ENCODE measurements at regions of chr16 and their contacts with region 1.

Region 1: GRCh38 chr16:10509534-10510025 is 70.8 kb downstream of the EMP2 start:
- DNase-seq: peak; percentile 75
- ATAC-seq: peak; percentile 84
- H3K4me3 Mint-ChIP-seq: no peak overlapping the region
- H3K27ac Mint-ChIP-seq: no peak overlapping the region
- H3K4me1 Mint-ChIP-seq: peaks cover 3% of the 10 kb centered on the region
- H3K27me3 Mint-ChIP-seq: peaks cover 19% of the 10 kb centered on the region

Region 2: DNA sequence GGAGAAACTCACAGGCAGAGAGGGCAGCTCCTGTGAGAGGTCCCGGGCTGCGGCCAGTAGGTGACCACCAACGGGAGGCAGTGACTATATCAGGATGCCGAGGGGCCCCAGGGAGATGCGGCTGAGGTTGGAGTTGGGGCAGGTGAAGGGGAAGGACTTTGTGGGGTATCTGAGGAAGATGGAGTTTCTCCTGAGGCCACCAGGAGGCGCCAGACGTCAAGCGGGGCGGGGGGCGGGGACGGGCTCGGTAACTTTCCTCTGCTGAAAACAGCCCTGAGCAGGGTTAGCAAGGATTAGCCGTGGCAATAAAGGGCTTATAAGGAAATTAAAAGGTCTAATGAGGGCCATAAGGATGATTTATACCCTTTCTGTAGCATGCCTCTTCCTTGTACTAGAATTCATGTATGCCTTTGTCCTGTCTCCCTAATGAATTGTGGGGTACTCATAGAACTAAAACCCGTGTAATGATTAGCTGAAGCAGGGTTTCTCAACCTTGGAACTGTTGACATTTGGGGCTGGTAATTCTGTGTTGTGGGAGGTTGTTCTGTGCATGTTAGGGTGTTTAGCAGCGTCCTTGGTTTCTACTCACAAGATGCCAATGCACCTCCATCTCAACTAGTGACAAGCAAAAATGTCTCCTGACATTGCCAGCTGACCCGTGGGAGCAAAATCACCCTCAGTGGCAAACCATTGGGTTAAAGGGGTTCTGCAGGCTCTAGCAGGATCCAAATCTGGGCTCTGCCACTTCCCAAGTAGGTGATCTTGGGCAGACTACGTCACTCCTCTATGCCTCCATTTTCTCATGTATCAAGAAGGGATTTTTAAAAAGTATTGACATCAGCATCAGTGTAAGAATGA is 252.6 kb before region 1 on chr16:
- CTCF ChIA-PET with region 1: interaction called, 44 read pairs
- DNase-seq: peak; percentile 56
- ATAC-seq: peak; percentile 57
- H3K4me3 Mint-ChIP-seq: no peak overlapping the region
- H3K27ac Mint-ChIP-seq: no peak overlapping the region
- H3K4me1 Mint-ChIP-seq: peaks cover 6% of the 10 kb centered on the region
- H3K27me3 Mint-ChIP-seq: peaks cover 3% of the 10 kb centered on the region

Region 3: DNA sequence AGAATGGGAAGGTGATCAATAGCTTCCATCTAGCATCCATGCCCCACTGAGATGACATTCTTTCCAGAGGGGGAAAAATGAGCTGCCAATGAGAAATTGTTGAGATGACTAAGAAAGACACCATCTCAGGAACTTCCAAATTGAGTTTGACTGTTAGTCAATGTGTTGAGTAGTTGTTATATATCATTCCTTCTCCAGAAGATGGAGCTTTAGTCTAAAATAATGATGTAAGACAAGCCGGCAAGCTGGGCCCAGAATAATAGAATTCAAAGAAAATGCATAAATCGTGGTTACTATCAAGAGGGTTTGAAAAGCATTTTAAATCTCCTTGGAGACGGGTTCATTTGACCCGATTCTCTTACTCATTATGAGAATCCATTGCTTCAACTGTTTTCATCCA is 194.8 kb before region 1 on chr16:
- CTCF ChIA-PET with region 1: interaction called, 44 read pairs
- DNase-seq: no peak
- ATAC-seq: no peak
- H3K4me3 Mint-ChIP-seq: no peak overlapping the region
- H3K27ac Mint-ChIP-seq: no peak overlapping the region
- H3K4me1 Mint-ChIP-seq: peaks cover 6% of the 10 kb centered on the region
- H3K27me3 Mint-ChIP-seq: no peaks in the 10 kb centered on the region

Measured in activated CD8-positive, alpha-beta memory T cell treated with anti-CD3 and anti-CD28 coated beads, Interleukin-2, amount 10 ng/mL, durations not matched to agents 7 days and 5 days (primary cell).